Activated T-helper 2 cell treated with anti-CD3 and anti-CD28 coated beads, Interferon-gamma antibody, Interleukin-2, Interleukin-4, amounts not matched to agents 10 μg/mL and 5 μg/mL and 100 μg/mL, durations not matched to agents 14 hours and 24 hours and 36 hours (primary cell): ENCODE measurements at regions of chr19 and their contacts with region 1.

Region 1: GRCh38 chr19:13117772-13118423 is at the start of gene NACC1:
- DNase-seq: peak; percentile 87
- H3K4me3 Mint-ChIP-seq: peak within 1 kb of the TSS; percentile 94
- H3K27ac Mint-ChIP-seq: peak within 1 kb of the TSS; percentile 95
- H3K4me1 Mint-ChIP-seq: peaks cover 40% of the 10 kb centered on the region
- H3K27me3 Mint-ChIP-seq: no peaks in the 10 kb centered on the region
- total RNA-seq, gene NACC1: 117 and 132 TPM in 2 replicates

Region 2: DNA sequence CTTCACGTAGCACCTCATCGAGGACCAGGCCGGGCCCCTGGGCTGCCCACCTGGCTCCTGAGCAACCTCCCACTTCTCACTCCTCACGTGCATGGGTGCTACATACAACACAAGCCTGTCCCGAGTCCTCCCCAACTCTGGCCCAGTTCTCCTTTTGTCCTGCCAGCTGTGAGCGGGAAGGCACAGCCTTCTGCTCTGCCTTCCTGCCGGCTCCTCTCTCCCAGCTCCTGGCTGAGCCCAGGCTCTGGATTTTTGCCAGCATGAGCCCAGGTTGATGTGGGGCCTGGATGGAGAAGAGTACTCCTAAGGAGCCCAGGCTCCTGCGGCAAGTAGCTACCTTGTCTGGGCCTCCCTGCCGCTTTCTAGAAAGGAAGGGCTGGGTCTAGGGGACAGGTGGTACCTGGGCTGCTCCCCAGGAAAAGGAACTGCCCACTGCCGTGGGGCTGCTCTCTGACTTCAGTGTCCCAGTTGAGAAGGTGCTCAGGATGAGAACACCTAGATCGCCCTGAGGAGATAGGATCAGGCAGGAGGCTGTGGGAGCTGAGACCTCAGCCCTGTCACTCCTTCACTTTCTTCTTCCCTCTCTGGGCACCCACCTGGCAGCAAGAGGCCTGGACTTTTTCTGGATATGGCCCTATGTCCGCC is 38.9 kb before region 1 on chr19:
- intact Hi-C with region 1: no loop called
- DNase-seq: no peak
- H3K4me3 Mint-ChIP-seq: no peak overlapping the region
- H3K27ac Mint-ChIP-seq: no peak overlapping the region
- H3K4me1 Mint-ChIP-seq: no peaks in the 10 kb centered on the region
- H3K27me3 Mint-ChIP-seq: no peaks in the 10 kb centered on the region

Region 3: GRCh38 chr19:13104360-13104847 is 13.5 kb before region 1 on chr19:
- intact Hi-C with region 1: loop called (anchors 1 kb)
- DNase-seq: peak; percentile 62
- H3K4me3 Mint-ChIP-seq: peak overlapping the region; percentile 92
- H3K27ac Mint-ChIP-seq: peak overlapping the region; percentile 95
- H3K4me1 Mint-ChIP-seq: peaks cover 24% of the 10 kb centered on the region
- H3K27me3 Mint-ChIP-seq: no peaks in the 10 kb centered on the region

Region 4: DNA sequence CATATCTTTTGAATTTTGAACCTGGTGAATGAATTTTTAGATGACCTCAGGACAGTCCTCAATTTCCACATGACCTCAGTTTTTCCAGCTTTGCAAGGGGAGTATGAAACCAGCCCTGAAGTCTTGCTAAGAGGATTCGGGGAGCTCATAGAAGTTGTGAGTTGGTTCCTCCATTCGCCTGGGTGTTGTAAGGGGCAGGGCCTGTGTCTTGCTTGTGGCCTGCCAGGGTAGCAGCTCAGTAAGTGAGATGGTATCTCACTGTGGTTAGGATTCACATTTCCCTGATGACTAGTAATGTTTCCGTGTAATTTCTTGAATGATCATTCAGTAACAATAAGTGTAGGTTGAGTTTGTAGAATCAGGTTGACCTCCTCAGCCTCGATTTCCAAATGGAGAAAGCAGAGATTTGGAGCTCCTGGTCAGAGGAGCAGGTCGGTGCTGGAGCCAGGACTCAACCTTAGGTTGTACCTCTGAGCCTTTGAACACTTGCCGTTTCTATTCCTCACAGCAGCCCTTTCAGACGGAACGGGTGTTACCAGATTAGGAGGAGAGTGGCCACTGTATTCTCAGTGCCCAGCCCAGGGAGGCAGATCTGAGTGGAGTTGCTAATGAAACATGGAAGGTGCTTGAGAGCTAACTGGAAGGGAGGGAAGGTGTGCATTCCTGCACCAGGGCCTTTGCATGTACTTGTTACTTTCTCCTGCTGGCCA is 14.7 kb after region 1 on chr19:
- intact Hi-C with region 1: loop called (anchors 1 kb)
- DNase-seq: peak; percentile 70
- H3K4me3 Mint-ChIP-seq: peak overlapping the region; percentile 78
- H3K27ac Mint-ChIP-seq: peak overlapping the region; percentile 98
- H3K4me1 Mint-ChIP-seq: peaks cover 42% of the 10 kb centered on the region
- H3K27me3 Mint-ChIP-seq: no peaks in the 10 kb centered on the region

Region 5: DNA sequence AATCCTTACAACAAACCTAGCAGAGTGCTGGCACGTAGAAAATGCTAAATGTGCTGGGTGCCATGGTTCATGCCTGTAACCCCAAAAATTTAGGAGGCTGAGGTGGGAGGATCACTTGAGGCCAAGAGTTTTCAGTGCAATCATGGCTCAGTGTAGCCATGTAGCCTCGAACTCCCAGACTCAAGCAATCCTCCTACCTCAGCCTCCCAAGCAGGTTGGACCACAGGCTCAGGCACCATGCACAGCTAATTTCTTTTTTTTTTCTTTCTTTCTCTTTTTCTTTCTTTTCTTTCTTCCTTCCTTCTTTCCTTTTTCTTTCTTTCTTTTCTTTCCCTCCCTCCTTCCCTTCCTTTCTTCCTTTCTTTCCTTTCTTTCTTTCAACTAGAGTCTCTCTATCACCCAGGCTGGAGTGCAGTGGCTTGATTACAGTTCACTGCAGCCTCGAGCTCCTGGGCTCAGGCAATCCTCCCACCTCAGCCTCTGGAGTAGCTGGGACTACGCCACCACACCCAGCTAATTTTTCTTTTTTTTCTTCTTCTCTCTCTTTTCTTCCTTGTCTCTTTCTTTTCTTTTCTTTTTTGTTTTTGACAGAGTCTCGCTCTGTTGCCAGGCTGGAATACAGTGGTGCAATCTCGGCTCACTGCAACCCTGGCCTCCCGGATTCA is 39.4 kb after region 1 on chr19:
- intact Hi-C with region 1: no loop called
- DNase-seq: no peak
- H3K4me3 Mint-ChIP-seq: peak overlapping the region; percentile 63
- H3K27ac Mint-ChIP-seq: peak overlapping the region; percentile 99
- H3K4me1 Mint-ChIP-seq: peaks cover 32% of the 10 kb centered on the region
- H3K27me3 Mint-ChIP-seq: no peaks in the 10 kb centered on the region

Region 6: DNA sequence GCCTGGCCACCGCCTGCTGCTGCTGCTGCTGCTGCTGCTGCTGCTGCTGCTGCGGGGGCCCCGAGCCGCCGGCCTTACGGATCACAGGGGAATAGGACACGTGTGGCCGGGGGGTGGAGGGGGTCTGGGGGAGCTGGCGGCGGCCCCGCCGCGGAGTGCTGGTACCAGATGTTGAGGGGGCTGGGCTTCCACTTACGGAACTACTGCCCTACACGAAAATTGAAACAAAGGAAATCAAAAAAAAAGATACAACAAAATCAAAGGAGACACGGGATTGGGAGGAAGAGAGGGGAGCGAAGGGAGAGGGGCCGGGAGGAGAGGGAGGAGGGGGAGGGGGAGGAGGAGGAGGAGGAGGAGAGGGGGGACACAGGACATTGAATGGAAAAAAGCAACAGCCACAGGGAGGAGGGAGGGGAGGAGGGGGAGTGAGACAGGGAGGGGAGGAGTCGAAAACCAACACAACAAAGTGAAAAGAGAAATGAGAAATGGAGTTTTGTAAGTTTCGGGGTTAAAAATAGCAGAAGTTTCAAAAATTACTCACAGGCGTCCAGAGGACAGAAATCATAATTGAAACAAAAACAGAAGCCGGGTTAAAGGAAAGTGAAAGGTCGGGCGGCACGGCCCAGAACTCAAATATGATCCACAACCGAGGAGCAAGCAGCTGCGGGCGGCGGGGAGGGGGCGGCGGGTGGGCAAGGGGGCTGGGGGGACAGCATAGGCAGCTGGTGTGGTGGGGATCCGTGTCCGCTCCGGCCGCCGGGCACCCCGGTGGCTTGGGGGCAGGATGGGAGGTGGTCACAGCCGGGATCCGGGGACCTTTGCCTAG is 90.2 kb after region 1 on chr19:
- intact Hi-C with region 1: no loop called
- DNase-seq: peak; percentile 59
- H3K4me3 Mint-ChIP-seq: peak overlapping the region; percentile 78
- H3K27ac Mint-ChIP-seq: peak overlapping the region; percentile 95
- H3K4me1 Mint-ChIP-seq: peaks cover 6% of the 10 kb centered on the region
- H3K27me3 Mint-ChIP-seq: no peaks in the 10 kb centered on the region

Region 7: GRCh38 chr19:13430790-13431582 is 313.1 kb after region 1 on chr19:
- intact Hi-C with region 1: no loop called
- DNase-seq: peak; percentile 26
- H3K4me3 Mint-ChIP-seq: no peak overlapping the region
- H3K27ac Mint-ChIP-seq: no peak overlapping the region
- H3K4me1 Mint-ChIP-seq: no peaks in the 10 kb centered on the region
- H3K27me3 Mint-ChIP-seq: no peaks in the 10 kb centered on the region